ENCODE measurements at regions of chr6 and their contacts with region 1.

Region 1: DNA sequence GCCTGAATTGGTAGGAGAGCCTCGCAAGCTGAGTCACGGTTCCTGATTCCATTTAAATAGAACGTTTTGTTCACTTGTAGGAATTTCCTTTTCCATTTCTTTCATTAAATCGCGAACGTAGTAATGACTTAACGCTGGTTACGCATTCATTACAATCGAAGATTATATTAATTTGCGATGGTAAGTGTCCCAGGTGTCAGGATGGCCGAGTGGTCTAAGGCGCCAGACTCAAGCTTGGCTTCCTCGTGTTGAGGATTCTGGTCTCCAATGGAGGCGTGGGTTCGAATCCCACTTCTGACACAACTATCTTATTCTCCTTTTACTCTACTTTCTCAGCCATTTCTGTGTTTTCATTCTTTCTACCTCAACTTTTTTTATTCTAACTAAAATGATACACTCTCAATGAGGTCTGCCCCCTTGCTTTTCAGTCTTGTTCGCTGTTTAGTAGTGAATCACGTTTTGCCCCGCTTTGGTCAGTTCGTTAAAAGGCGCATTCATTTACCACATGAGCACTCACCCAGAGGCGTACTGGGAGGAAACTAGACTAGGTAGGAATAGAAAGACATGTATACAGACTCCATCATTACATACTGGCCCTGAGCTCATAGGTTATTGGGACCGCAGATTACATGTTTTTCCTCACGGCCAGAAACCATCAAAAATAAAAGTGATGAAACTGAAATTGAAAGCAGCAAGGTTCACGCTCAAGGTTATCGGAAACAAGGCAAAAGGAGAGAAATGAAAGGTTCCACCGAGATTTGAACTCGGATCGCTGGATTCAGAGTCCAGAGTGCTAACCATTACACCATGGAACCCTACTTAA is 17.3 kb upstream of the TRIM27 start:
- DNase-seq: peak; percentile 87
- ATAC-seq: peak; percentile 72
- H3K4me3 Mint-ChIP-seq: peak overlapping the region; percentile 79
- H3K27ac Mint-ChIP-seq: peak overlapping the region; percentile 96
- H3K4me1 Mint-ChIP-seq: peaks cover 39% of the 10 kb centered on the region
- H3K27me3 Mint-ChIP-seq: no peaks in the 10 kb centered on the region

Region 2: DNA sequence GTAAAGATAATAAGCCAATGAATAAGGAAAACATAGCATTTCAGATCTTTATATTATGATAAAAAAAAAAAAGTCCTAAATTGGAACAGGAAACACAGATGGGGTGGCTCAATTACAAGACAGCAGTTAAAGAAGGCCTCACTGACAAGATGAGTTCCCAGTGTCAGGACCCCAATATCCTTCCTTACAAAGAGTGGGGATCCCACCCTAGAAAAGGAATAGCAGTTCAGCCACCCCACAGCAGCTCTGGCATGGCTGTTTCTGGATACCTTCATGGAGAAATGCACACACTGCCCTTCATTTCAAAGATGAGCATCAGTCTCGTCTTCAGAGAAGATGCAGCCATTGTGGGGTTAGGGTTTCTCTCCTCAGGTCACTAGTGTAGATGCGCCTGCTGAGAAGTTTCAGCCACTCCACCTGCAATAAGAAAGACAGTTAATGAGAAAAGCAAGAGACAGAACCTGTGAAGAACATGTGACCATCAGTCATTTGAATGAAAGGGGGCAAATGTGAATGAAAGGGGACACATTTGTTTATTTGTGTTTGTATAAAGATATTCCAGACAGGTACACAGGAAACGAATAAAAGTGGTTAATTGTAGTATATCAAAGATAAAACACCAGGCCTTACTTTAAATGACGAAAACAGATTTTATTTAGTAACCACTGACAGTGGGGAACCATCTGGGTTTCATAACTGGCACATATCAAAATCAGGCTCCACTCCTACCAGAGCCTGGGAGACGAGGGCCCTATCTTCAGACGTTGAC is 1814.8 kb before region 1 on chr6:
- CTCF ChIA-PET with region 1: no interaction called
- POLR2A ChIA-PET with region 1: no interaction called
- intact Hi-C with region 1: no loop called
- DNase-seq: no peak
- ATAC-seq: no peak
- H3K4me3 Mint-ChIP-seq: peak overlapping the region; percentile 68
- H3K27ac Mint-ChIP-seq: peak overlapping the region; percentile 67
- H3K4me1 Mint-ChIP-seq: peaks cover 20% of the 10 kb centered on the region
- H3K27me3 Mint-ChIP-seq: no peaks in the 10 kb centered on the region

Region 3: GRCh38 chr6:27177485-27178406 is 1763.3 kb before region 1 on chr6:
- CTCF ChIA-PET with region 1: no interaction called
- POLR2A ChIA-PET with region 1: no interaction called
- intact Hi-C with region 1: loop called in 1 of 2 experiments (anchors 5 kb)
- DNase-seq: peak; percentile 86
- ATAC-seq: peak; percentile 89
- H3K4me3 Mint-ChIP-seq: peak overlapping the region; percentile 88
- H3K27ac Mint-ChIP-seq: peak overlapping the region; percentile 87
- H3K4me1 Mint-ChIP-seq: peaks cover 2% of the 10 kb centered on the region
- H3K27me3 Mint-ChIP-seq: no peaks in the 10 kb centered on the region

Region 4: GRCh38 chr6:27902335-27903314 is 1038.4 kb before region 1 on chr6:
- CTCF ChIA-PET with region 1: no interaction called
- POLR2A ChIA-PET with region 1: no interaction called
- intact Hi-C with region 1: loop called in 1 of 2 experiments (anchors 2 kb)
- DNase-seq: peak; percentile 91
- ATAC-seq: peak; percentile 81
- H3K4me3 Mint-ChIP-seq: peak overlapping the region; percentile 74
- H3K27ac Mint-ChIP-seq: peak overlapping the region; percentile 89
- H3K4me1 Mint-ChIP-seq: peaks cover 5% of the 10 kb centered on the region
- H3K27me3 Mint-ChIP-seq: peaks cover 4% of the 10 kb centered on the region

Region 5: DNA sequence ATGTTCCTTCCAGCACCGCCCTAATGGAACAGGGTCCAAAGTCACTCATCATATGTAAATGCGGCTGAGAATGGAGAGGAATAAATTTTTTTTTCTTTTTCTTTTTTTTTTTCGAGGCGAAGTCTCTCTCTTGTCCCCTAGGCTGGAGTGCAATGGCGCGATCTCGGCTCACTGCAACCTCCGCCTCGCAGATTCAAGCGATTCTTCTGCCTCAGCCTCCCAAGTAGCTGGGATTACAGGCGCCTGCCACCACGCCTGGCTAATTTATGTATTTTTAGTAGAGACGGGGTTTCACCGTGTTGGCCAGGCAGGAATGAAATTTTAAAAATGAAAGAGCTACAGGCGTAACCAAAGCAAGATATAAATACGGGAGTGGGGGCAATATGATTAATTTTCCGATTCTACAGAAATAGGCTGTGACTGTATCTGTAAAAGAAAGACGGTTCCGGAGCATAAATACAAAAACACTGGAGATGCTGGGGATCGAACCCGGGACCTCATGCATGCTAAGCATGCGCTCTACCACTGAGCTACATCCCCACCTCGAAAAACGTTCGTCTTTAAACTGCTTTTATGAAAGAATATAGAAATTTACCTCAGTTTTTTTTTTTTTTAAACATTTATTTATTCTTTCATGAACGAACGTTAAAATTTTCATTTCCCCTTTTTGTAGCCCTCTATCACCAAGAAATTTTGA is 283.2 kb before region 1 on chr6:
- CTCF ChIA-PET with region 1: no interaction called
- POLR2A ChIA-PET with region 1: no interaction called
- intact Hi-C with region 1: loop called in 1 of 2 experiments (anchors 2 kb)
- DNase-seq: peak; percentile 84
- ATAC-seq: peak; percentile 94
- H3K4me3 Mint-ChIP-seq: peak overlapping the region; percentile 77
- H3K27ac Mint-ChIP-seq: peak overlapping the region; percentile 76
- H3K4me1 Mint-ChIP-seq: peaks cover 24% of the 10 kb centered on the region
- H3K27me3 Mint-ChIP-seq: peaks cover 50% of the 10 kb centered on the region

Region 6: GRCh38 chr6:28789553-28790083 is 151.5 kb before region 1 on chr6:
- CTCF ChIA-PET with region 1: no interaction called
- POLR2A ChIA-PET with region 1: no interaction called
- intact Hi-C with region 1: no loop called
- DNase-seq: peak; percentile 67
- ATAC-seq: peak; percentile 67
- H3K4me3 Mint-ChIP-seq: peak overlapping the region; percentile 66
- H3K27ac Mint-ChIP-seq: peak overlapping the region; percentile 6
- H3K4me1 Mint-ChIP-seq: peaks cover 15% of the 10 kb centered on the region
- H3K27me3 Mint-ChIP-seq: peaks cover 79% of the 10 kb centered on the region

Region 7: DNA sequence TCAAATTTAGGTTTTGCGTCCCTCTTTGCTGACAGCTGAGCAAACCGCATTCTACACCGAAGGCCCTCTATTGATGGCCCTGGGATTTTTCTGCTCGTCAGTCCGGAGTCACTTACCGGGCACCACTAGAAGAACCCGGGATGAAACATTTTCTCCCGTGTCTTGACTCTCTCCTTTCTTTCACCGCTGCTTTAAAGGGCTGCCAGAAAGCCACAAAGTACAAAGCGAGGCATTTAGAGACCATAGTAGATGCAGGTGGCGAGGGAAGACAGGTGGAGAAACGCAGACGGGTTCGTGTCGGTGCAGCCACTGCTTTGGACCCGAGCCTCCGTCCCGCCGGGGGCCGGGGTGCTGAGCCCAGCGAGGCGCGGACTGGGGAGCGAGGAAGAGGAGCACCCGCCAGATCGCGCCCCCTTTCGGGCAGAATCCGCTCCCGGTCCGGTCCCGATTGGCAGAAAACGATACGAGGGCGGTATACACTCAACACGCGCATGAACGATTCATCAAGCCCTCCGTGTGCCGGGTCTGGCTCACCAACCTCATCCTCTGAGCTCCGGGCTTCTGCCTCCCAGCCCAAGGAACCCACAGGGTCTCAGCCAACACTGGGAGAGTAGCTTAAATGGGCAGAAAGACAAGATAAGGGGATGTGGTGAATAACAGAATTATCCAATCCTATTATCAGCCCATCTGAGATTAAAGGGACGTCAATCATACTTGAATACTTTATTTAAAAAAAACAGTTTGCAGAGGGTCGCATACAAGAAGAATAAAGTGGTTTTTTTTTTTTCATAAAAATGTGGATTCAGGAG is 102.2 kb before region 1 on chr6:
- CTCF ChIA-PET with region 1: interaction called, 32 read pairs
- POLR2A ChIA-PET with region 1: interaction called, 7 read pairs
- intact Hi-C with region 1: loop called (anchors 1 kb)
- DNase-seq: peak; percentile 94
- ATAC-seq: peak; percentile 87
- H3K4me3 Mint-ChIP-seq: peak overlapping the region; percentile 83
- H3K27ac Mint-ChIP-seq: peak overlapping the region; percentile 75
- H3K4me1 Mint-ChIP-seq: peaks cover 15% of the 10 kb centered on the region
- H3K27me3 Mint-ChIP-seq: peaks cover 17% of the 10 kb centered on the region

Region 8: DNA sequence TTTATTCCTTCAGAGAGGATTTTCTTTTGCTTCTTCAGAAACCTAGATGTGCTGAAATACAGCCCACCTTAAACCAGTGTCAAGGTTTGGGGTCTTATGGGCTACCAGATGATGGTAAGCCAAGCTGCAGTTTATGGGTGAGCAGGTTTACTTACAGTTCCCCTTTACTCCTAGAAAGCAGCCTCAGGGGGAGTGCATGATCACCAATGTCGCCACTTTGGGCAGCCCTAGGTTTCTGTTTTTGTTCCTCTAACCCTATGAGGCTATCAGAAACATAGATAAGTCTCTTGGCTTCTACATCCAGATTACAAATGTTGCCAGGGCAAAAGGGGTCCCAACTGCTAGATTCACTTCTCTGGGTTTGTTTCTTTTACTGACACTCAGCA is 84.5 kb before region 1 on chr6:
- CTCF ChIA-PET with region 1: no interaction called
- POLR2A ChIA-PET with region 1: no interaction called
- intact Hi-C with region 1: no loop called
- DNase-seq: no peak
- ATAC-seq: no peak
- H3K4me3 Mint-ChIP-seq: no peak overlapping the region
- H3K27ac Mint-ChIP-seq: no peak overlapping the region
- H3K4me1 Mint-ChIP-seq: peaks cover 5% of the 10 kb centered on the region
- H3K27me3 Mint-ChIP-seq: peaks cover 2% of the 10 kb centered on the region

Region 9: DNA sequence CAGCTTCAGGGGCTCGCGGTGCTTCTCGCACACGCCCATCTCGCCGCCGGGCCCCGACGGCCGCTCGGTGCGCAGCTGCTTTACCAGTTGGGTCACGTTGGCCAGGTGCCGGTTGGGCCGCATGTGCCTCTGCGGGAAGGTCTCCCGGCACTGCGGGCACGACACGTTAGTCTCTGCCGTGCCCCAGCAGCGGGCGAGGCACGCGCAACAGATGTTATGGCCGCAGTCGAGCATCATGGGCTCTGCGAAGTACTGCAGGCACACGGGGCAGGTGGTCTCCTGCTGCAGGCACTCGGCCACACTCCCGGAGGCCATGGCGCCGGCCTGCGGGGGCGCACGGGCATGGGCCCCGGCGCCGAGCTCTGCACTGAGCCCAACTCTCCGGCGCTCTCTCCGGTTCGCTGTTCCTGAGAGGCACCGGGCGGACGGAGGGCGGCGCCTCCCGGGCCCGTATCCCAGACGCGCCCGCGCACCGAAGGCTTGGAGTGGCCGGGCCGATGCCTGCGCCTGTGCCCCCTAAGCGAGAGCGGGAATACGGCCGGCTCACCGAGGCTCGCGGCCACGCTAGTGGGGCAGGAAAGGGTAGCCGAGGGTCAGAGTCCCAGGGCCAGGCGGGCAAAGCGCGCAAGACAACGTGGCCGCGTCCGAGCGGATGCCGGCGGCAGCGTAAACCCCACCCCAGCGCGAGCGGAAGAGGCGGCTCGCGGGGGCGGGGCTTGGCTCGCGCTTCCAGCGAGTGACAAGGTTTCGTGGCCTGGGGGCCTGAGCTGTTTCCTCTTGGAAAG is 17.6 kb before region 1 on chr6 and contains the start of gene TRIM27:
- CTCF ChIA-PET with region 1: interaction called, 4 read pairs
- POLR2A ChIA-PET with region 1: interaction called, 6 read pairs
- intact Hi-C with region 1: loop called (anchors 1 kb)
- DNase-seq: peak; percentile 88
- ATAC-seq: peak; percentile 81
- H3K4me3 Mint-ChIP-seq: peak within 1 kb of the TSS; percentile 96
- H3K27ac Mint-ChIP-seq: peak within 1 kb of the TSS; percentile 88
- H3K4me1 Mint-ChIP-seq: peaks cover 36% of the 10 kb centered on the region
- H3K27me3 Mint-ChIP-seq: no peaks in the 10 kb centered on the region
- total RNA-seq, gene TRIM27: 48.5 to 54.6 TPM

Region 10: GRCh38 chr6:29016559-29017427 is 75.7 kb after region 1 on chr6:
- CTCF ChIA-PET with region 1: interaction called, 4 read pairs
- POLR2A ChIA-PET with region 1: no interaction called
- intact Hi-C with region 1: loop called (anchors 1 to 2 kb)
- DNase-seq: peak; percentile 90
- ATAC-seq: peak; percentile 87
- H3K4me3 Mint-ChIP-seq: peak overlapping the region; percentile 77
- H3K27ac Mint-ChIP-seq: peak overlapping the region; percentile 78
- H3K4me1 Mint-ChIP-seq: peaks cover 10% of the 10 kb centered on the region
- H3K27me3 Mint-ChIP-seq: peaks cover 20% of the 10 kb centered on the region